AG04450 (cell line): ENCODE measurements at regions of chr12 and their contacts with region 1.

Region 1: DNA sequence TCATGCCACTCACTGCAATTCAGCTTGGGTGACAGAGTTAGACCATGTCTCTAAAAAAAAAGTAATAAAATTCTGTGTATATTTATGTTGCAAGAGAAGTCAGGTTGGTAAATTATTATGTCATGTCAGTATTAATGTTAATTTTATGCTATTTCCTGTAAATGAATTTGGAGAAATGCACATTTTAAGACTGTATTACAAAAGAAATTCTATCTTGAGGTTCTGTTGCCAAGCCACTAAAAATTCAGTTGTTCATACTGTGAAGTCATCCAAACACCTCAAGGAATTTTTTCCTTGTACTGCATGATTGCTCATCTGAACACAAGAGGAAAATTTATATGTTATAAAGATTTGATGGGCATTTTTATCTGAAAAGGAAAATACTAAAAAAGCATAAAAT is 23.3 kb upstream of the HMGA2 start:
- DNase-seq: no peak
- H3K4me3 ChIP-seq: no peak overlapping the region
- H3K27ac ChIP-seq: no peak overlapping the region
- H3K27me3 ChIP-seq: no peaks in the 10 kb centered on the region
- CTCF ChIP-seq: no peak

Region 2: DNA sequence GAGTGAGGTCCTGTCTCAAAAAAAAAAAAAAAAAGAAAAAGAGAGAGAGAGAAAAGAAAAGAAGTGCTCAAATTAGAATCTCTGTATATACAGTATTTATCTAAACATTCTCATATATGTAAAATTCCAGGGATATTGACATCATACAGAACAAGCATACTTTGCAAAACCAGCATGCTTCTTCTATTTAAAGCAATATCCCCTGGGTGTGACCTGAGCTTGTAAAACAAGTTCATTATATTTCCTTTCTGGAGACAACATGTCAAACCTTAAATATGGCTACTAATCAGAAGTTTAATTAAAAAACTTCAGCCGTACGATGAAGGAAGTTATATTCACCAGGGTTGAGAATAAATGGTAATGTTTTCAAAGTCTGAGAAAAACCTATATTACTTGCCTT is 152.5 kb before region 1 on chr12:
- CTCF ChIA-PET with region 1: no interaction called
- POLR2A ChIA-PET with region 1: interaction called, 10 read pairs
- DNase-seq: no peak
- H3K4me3 ChIP-seq: no peak overlapping the region
- H3K27ac ChIP-seq: no peak overlapping the region
- H3K27me3 ChIP-seq: no peaks in the 10 kb centered on the region
- CTCF ChIP-seq: no peak

Region 3: DNA sequence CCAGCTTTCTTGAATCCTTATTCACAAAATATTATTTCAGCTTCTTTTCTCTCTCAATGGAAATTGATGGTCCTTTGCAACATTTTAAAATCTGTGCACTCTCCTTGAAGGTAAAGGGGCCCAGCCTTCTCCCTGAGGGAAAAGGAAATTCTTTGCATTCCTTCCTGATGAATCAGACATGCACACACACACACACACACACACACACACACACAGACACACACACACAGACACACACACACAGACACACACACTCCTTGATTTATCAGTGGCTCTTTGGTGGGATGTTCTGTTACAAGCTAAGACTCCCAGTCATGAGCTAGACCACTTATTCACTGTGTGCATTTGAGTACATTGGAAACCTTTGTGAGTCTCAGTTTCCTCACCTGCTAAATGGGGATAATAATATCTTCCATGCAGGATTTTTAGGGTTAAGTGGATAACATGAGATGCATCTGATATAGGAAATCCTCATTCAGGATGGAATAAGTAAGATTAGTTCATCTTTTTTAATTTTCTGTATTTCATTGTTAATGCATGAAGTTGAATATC is 21.8 kb before region 1 on chr12:
- CTCF ChIA-PET with region 1: no interaction called
- POLR2A ChIA-PET with region 1: no interaction called
- DNase-seq: no peak
- H3K4me3 ChIP-seq: no peak overlapping the region
- H3K27ac ChIP-seq: no peak overlapping the region
- H3K27me3 ChIP-seq: no peaks in the 10 kb centered on the region
- CTCF ChIP-seq: no peak